A673 (cell line): ENCODE measurements at regions of chr1 and their contacts with region 1.

Region 1: DNA sequence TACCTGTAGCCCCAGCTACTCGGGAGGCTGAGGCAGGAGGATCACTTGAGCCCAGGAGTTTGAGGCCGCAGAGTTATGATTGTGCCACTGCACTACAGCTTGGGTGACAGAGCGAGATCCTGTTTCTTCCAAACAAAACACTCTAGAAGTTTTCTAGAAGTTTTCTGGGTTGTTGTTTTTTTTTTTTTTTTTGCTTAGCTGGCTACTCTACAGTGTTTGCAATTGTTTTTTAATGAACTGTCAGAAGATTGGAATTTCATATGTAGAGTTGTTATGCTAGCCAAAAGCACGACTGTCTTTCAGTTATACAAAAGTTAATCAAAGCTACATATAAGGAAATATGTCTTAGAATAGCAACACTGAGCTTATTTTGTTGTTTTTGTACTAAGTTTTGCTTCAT is 30.9 kb upstream of the NEXN start:
- DNase-seq: no peak
- H3K4me3 ChIP-seq: no peak overlapping the region
- H3K27ac ChIP-seq: no peak overlapping the region
- H3K4me1 ChIP-seq: no peaks in the 10 kb centered on the region
- H3K27me3 ChIP-seq: no peaks in the 10 kb centered on the region
- CTCF ChIP-seq: no peak

Region 2: GRCh38 chr1:77659879-77660593 is 197.5 kb before region 1 on chr1:
- CTCF ChIA-PET with region 1: no interaction called
- POLR2A ChIA-PET with region 1: interaction called, 11 read pairs
- intact Hi-C with region 1: no loop called
- DNase-seq: no peak
- H3K4me3 ChIP-seq: no peak overlapping the region
- H3K27ac ChIP-seq: no peak overlapping the region
- H3K4me1 ChIP-seq: no peaks in the 10 kb centered on the region
- H3K27me3 ChIP-seq: no peaks in the 10 kb centered on the region
- CTCF ChIP-seq: no peak

Region 3: GRCh38 chr1:77768006-77768405 is 89.5 kb before region 1 on chr1:
- CTCF ChIA-PET with region 1: no interaction called
- POLR2A ChIA-PET with region 1: no interaction called
- intact Hi-C with region 1: no loop called
- DNase-seq: no peak
- H3K4me3 ChIP-seq: no peak overlapping the region
- H3K27ac ChIP-seq: no peak overlapping the region
- H3K4me1 ChIP-seq: no peaks in the 10 kb centered on the region
- H3K27me3 ChIP-seq: no peaks in the 10 kb centered on the region
- CTCF ChIP-seq: no peak

Region 4: DNA sequence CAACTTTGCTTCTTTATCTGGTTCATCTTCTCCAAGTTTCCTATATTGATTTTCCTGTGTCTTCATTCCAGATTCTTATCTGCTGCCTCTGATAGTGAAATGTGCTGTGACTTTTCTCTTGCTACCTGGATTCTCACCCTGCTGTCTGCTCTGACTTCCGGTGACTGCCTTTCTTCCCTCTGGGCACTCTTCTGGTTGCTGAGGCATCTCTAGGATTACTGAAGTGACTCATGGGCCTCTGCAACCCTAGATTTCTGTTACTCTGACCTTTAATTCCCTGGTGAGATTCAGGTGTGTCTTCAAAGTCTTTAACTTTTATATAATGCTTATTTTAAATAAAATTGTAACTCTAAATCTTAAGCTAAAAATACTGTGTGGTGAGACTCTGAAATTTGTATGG is 235.1 kb after region 1 on chr1:
- CTCF ChIA-PET with region 1: no interaction called
- POLR2A ChIA-PET with region 1: no interaction called
- intact Hi-C with region 1: no loop called
- DNase-seq: no peak
- H3K4me3 ChIP-seq: no peak overlapping the region
- H3K27ac ChIP-seq: no peak overlapping the region
- H3K4me1 ChIP-seq: no peaks in the 10 kb centered on the region
- H3K27me3 ChIP-seq: no peaks in the 10 kb centered on the region
- CTCF ChIP-seq: no peak